Pancreas (tissue), 10 donors: ENCODE measurements at regions of chrX and their contacts with region 1.

Region 1: GRCh38 chrX:12080265-12080664 is 58.0 kb upstream of the FRMPD4 start:
- DNase-seq: peak in 1 of 6 donors; percentile 8
- ATAC-seq: peak in 3 of 4 donors; percentile 56 to 62 (median 59)
- H3K4me3 ChIP-seq: no peak overlapping the region
- H3K27ac ChIP-seq: no peak overlapping the region
- H3K4me1 ChIP-seq: no peaks in the 10 kb centered on the region
- H3K27me3 ChIP-seq: peaks cover 0 to 26% (median 0%) of the 10 kb centered on the region in 4 donors
- CTCF ChIP-seq: peak in 3 of 4 donors; percentile 12 to 36 (median 30)

Region 2: GRCh38 chrX:11886745-11887144 is 193.5 kb before region 1 on chrX:
- intact Hi-C with region 1: no loop called
- DNase-seq: no peak
- ATAC-seq: no peak
- H3K4me3 ChIP-seq: no peak overlapping the region
- H3K27ac ChIP-seq: no peak overlapping the region
- H3K4me1 ChIP-seq: no peaks in the 10 kb centered on the region
- H3K27me3 ChIP-seq: peaks cover 0 to 5% (median 2%) of the 10 kb centered on the region in 4 donors
- CTCF ChIP-seq: no peak

Region 3: GRCh38 chrX:12494400-12495138 is 414.3 kb after region 1 on chrX:
- intact Hi-C with region 1: no loop called
- DNase-seq: no peak
- ATAC-seq: no peak
- H3K4me3 ChIP-seq: no peak overlapping the region
- H3K27ac ChIP-seq: no peak overlapping the region
- H3K4me1 ChIP-seq: no peaks in the 10 kb centered on the region
- H3K27me3 ChIP-seq: no peaks in the 10 kb centered on the region
- CTCF ChIP-seq: no peak

Region 4: DNA sequence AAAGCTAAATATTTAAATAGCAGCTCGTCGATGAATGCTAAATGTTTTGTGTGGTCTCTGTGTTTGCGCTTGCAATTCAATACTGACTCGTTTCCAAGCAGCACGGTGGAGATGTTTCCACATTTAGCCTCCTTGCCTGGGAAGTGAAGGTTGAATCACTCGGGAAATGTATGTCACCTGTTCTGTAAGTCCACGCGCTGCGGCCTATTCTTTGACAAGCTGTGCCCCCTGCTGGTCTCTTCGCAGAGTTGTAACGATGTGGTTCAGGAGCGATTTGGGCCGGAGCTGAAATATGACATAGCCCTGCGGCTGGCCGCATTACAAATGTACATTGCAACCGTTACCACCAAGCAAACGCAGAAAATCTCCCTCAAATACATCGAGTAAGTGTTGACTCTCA is 621.4 kb after region 1 on chrX:
- intact Hi-C with region 1: loop called in 1 of 3 experiments (anchors 10 kb)
- DNase-seq: peak; percentile 55 to 78 (median 68)
- ATAC-seq: peak; percentile 91 to 97 (median 96)
- H3K4me3 ChIP-seq: no peak overlapping the region
- H3K27ac ChIP-seq: no peak overlapping the region
- H3K4me1 ChIP-seq: no peaks in the 10 kb centered on the region
- H3K27me3 ChIP-seq: peaks cover 0 to 3% (median 0%) of the 10 kb centered on the region in 4 donors
- CTCF ChIP-seq: peak; percentile 26 to 44 (median 42)